Activated CD4-positive, alpha-beta T cell treated with anti-CD3 and anti-CD28 coated beads, Interleukin-2, amount 10 ng/mL, durations not matched to agents 24 days and 14 days (primary cell): ENCODE measurements at regions of chr2 and their contacts with region 1.

Region 1: DNA sequence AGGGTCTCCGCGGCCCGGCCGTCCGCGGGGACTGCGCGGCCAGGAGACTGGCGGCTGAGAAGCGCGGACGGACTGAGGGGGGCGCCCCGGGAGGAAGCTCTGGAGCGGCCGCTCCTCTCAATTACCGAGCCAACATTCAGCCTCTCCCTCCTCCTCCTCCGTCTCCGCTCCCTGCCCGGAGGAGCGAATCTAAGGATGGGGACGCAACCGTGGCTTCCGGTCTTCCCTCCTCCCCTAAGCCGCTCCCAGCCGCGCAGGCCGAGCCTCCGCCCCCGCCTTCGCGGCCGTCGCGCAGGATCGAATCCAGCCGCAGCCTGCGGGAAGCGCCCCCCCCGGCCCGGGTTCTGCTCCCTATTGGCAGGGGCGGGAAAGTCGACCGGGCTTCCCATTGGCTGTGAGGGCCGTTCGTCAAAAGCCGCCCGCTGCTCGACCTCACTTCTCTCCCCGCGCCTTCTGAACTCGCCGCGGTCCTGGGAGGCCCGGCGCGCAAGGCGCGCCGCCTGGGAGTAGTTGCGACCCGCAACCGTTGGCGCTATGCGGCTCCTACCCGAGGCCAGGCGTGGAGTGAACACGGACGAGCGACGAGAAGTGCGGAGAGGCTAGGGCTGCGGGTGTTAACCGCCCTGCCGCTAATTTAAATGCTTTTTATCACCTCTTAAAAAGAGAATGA is at the start of gene HNRNPLL:
- DNase-seq: peak; percentile 99
- H3K4me3 Mint-ChIP-seq: peak within 1 kb of the TSS; percentile 97
- H3K27ac Mint-ChIP-seq: peak within 1 kb of the TSS; percentile 94
- H3K4me1 Mint-ChIP-seq: peaks cover 45% of the 10 kb centered on the region
- H3K27me3 Mint-ChIP-seq: no peaks in the 10 kb centered on the region
- total RNA-seq, gene HNRNPLL: 75.8 and 80.3 TPM in 2 replicates

Region 2: DNA sequence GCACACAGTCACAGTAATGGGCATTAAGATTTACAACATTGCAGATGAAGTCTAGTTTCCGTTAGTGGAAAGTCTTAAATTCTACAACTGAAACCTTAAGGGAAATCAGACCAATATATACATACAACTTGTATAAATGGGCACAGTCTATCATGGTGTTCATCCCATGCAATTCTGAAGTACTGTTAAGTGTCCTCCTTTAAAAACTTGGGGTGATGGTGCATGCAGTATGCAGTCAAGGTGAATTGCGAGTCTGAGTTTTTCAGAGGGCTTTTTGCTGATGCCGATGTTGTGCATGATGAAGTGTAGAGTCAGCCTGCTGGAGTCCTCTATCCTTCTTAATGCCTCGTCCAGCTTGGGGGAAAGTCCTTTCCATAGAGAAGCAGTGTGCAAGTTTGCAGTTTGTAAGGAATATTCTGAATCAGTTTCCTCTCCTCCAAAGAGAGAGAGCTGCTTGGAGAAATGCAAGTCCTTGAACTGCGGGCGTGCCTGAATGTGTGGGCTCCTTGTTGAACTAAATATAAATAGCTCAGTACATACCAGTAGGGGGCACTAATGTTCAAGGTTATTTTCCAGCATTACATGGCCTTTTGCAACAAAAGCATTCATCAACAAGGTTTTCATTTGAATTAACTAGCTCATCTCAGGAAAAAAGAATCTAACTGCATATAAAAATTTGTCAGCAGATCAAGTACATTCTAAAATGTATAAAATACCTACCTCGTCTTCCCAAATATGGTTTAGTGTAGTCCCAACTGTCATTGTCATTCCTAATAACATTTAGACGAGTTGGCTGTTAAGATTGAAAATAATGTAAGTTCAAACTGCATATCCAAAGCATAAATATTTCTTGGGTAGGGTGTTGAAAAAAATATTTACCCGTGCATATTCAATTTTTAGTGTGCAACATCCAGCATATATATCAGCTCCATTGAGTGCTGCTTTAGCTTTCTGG is 21.4 kb before region 1 on chr2:
- intact Hi-C with region 1: loop called (anchors 1 kb)
- DNase-seq: peak; percentile 83
- H3K4me3 Mint-ChIP-seq: no peak overlapping the region
- H3K27ac Mint-ChIP-seq: peak overlapping the region; percentile 22
- H3K4me1 Mint-ChIP-seq: peaks cover 26% of the 10 kb centered on the region
- H3K27me3 Mint-ChIP-seq: no peaks in the 10 kb centered on the region

Region 3: DNA sequence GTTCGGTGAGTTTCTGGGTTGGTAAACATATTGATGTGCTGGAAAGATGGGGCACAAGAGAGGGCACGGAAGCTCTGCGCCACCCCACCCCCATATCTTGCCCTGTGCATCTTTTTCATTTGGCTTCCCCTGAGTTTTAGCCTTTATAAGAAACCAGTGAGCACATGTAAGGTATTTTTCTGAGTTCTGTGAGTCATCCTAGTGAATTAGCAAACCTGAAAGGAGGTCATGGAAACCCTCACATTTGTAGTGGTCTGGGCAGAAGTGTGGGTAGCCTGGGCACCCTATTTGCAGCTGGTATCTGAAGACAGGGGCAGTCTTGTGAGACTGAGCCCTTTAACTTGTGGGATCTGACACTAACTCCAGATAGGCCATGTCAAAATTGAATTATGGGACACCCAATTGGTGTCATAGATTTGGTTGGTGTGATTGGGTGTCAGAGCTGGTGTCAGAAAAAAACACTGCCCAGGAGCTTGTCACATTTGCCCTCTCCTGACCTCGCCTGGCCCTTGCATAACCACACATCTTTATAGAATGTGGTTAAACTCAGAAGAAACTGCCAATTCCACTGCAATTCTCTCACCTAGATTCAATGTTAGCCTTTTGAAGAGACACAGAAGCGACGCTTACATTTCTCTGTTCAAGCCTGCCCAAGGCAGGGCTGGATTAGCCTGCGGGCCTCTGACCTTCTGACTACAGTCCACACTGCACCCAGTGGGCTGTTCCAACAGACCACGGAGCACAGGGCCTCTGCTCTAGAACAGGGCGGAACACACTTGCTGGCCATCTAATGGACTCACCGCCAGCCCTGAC is 51.1 kb after region 1 on chr2:
- intact Hi-C with region 1: loop called (anchors 1 kb)
- DNase-seq: peak; percentile 82
- H3K4me3 Mint-ChIP-seq: peak overlapping the region; percentile 63
- H3K27ac Mint-ChIP-seq: peak overlapping the region; percentile 87
- H3K4me1 Mint-ChIP-seq: peaks cover 58% of the 10 kb centered on the region
- H3K27me3 Mint-ChIP-seq: no peaks in the 10 kb centered on the region

Region 4: DNA sequence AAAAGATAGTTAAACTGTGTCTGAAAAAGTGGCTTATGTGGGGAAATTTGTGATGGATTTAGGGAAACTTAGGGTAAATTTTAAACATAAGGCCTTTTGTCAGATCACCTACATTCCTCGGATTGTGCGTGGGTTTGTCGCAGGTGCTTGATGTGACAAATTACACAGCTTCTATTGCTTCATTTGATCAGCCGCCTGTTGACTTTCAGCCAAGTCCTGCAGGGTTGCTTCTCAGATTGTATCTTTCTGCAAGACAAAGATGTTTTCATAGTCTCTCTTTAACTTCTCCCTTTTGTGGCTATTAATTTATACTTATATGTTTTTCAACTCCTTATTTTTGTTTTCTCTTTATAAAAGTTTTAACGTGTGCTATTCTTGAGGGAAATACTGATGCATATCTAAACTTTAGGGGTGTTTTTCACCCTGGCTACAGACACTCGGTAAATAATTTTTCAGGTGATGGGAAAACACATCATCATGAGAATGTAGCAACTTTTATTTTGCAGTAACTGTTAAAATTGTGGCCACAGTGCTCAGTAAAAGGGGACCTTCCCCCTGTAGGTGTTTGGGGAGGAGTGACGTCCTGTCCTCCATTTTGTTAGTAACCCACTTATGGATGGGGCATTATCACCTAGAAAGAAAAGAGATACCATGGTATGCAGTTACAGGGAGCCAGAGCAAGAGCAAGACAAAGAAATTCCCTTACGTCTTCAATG is 94.4 kb after region 1 on chr2:
- intact Hi-C with region 1: loop called (anchors 2 kb)
- DNase-seq: no peak
- H3K4me3 Mint-ChIP-seq: no peak overlapping the region
- H3K27ac Mint-ChIP-seq: peak overlapping the region; percentile 81
- H3K4me1 Mint-ChIP-seq: peaks cover 58% of the 10 kb centered on the region
- H3K27me3 Mint-ChIP-seq: no peaks in the 10 kb centered on the region

Region 5: DNA sequence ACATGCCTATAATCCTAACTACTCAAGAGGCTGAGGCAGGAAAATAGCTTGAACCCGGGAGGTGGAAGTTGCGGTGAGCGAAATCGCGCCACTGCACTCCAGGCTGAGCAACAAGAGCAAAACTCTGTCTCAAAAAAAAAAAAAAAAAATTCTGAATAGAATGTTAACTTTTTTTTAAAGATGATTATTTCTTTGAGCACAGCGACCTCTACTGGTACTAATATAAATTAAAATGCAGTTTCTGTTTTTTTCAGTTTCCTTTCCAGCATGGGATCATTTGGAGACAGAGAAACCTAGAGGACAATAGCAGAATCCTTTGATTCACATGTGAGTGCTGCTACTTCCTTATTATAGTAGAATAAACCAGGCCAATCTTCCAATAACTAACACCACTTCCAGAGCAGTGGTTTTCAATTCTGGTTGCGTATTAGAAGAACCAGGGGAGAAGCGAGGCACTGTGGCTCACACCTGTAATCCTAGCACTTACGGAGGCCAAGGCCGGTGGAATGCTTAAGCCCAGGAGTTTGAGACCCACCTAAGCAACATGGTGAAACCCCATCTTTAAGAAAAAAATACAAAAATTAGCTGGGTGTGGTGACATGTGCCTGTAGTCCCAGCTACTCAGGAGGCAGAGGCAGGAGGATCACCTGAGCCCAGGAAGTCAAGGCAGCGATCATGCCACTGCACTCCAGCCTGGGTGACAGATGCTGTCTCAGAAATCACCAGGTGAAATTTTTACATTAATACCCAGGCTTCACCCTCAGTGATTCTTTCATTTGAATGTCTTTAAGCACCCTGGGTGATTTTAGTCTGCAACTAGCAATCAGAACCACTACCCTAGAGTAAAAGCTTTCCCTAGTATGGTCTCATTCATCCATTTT is 138.2 kb after region 1 on chr2:
- intact Hi-C with region 1: loop called (anchors 5 kb)
- DNase-seq: peak; percentile 67
- H3K4me3 Mint-ChIP-seq: no peak overlapping the region
- H3K27ac Mint-ChIP-seq: peak overlapping the region; percentile 13
- H3K4me1 Mint-ChIP-seq: peaks cover 28% of the 10 kb centered on the region
- H3K27me3 Mint-ChIP-seq: no peaks in the 10 kb centered on the region

Region 6: DNA sequence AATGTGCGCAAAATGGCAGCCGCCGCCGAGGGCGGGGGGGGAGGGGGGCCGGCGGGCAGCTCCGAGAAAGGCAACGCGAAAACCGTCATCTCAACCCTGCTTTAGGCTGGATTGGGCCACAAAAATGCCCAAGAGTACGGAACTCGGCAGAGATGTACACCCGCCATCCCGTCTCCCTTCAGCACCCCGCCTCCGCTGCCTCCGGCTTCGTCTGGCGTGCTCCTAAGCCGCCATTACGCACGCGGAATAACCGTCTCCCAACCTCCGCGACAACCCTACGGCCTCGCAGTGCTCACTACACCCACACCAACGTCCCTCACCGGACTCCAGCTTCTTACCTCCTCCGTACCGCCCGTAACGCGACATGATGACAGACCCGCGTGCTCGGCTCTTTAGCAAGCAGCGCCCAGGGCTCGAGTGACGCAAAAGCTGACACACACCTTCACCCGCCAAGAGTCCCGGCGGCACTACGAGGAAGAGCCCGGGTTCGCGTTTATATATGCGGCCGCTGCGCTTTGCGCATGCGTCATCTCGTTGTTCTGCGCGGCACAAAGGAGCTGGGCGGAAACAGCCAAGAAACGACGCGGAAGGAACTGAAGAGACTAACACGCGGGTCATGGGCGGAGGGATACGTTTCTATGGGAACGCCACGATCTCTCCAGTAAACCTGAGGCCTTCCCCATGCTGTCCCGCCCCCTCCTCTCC is 148.2 kb after region 1 on chr2 and contains the start of gene SRSF7:
- intact Hi-C with region 1: loop called (anchors 1 kb)
- DNase-seq: peak; percentile 99
- H3K4me3 Mint-ChIP-seq: peak within 1 kb of the TSS; percentile 91
- H3K27ac Mint-ChIP-seq: peak within 1 kb of the TSS; percentile 98
- H3K4me1 Mint-ChIP-seq: peaks cover 47% of the 10 kb centered on the region
- H3K27me3 Mint-ChIP-seq: peaks cover 2% of the 10 kb centered on the region
- total RNA-seq, gene SRSF7: 415 and 419 TPM in 2 replicates